Sciatic nerve (tissue), 2 donors: ENCODE measurements at regions of chr3 and their contacts with region 1.

Region 1: DNA sequence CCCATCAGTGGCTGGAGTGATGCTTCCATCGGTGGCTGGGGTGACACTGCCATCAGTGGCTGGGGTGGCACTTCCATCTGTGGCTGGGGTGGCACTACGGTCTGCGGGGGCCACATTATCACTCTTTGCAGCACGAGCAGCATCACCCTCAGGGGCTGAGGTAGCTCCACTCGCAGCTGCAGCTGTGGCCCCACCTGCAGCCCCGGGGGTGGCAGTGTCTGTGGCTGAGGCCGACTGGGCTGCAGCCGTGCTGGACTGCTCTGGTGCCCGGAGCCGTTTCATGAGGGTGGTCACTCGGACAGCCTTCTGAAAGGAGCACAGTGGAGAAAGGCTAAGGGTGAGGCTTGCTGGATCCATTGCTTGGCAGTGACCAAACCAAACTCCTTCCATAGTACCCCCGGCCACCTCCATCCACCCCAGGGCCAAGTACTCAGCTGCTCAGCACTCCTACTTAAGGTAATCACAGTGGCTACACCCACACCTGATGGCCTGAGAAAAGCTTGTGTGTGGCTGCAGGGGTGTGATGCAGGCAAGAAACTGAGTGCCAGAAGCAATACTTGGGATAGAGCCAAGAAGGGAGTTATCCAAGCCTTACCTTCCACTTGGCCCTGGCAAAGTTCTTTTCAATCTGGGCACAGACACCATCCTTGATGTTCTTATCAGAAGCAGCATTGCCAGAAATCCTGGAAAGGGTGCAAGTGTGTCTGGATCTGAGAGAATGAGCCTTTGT is 3.4 kb upstream of the TRAIP start:
- DNase-seq: no peak
- ATAC-seq: no peak

Region 2: GRCh38 chr3:49794926-49795905 is 64.5 kb before region 1 on chr3:
- intact Hi-C with region 1: loop called (anchors 1 kb)
- DNase-seq: no peak
- ATAC-seq: no peak